Activated naive CD4-positive, alpha-beta T cell treated with anti-CD3 and anti-CD28 coated beads, Interleukin-2, amount 10 ng/mL, durations not matched to agents 7 days and 5 days (primary cell): ENCODE measurements at regions of chr11 and their contacts with region 1.

Region 1: DNA sequence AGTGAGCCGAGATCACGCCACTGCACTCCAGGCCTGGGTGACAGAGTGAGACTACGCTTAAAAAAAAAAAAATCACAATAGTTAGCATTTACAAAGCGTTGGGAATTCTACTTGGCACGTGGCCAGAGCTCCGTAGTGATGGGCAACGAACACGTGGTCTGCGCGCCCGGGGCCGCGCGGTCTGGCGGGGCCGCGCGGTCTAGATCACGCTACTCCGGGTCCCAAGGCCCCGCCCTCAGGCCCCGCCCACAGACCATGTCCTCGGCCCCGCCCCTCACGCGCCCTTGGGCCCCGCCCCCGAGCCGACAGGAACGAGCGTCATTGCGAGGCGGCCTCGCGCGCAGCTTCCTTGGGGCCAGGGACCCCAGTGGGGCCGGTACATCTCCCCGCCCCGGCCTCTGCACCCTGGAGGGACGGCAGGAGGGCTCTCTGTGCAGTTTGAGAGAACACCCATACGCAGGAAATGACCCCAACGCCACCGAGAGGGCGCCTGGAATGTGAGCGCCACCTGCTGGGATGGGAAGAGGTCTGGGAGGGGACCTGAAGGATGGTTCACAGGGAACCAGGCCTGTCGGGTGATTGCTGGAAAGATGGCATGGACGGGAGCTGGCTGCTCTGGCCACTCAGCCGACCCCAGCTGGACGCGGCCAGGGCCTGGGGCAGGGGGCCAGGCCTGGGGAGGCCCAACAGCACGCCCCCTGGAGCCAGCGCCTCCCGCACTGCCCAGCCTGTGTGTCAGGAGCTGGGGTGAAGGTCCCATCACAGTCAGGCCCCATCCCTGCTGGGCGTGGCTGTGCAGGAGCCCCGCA is 2.0 kb upstream of the PTDSS2 start:
- DNase-seq: peak; percentile 97
- H3K4me3 Mint-ChIP-seq: peak overlapping the region; percentile 88
- H3K27ac Mint-ChIP-seq: peak overlapping the region; percentile 96
- H3K4me1 Mint-ChIP-seq: peaks cover 28% of the 10 kb centered on the region
- H3K27me3 Mint-ChIP-seq: peaks cover 32% of the 10 kb centered on the region

Region 2: GRCh38 chr11:363948-364761 is 84.0 kb before region 1 on chr11:
- CTCF ChIA-PET with region 1: interaction called, 14 read pairs
- DNase-seq: peak; percentile 68
- H3K4me3 Mint-ChIP-seq: no peak overlapping the region
- H3K27ac Mint-ChIP-seq: no peak overlapping the region
- H3K4me1 Mint-ChIP-seq: peaks cover 8% of the 10 kb centered on the region
- H3K27me3 Mint-ChIP-seq: peaks cover 69% of the 10 kb centered on the region

Region 3: GRCh38 chr11:406978-407739 is 41.0 kb before region 1 on chr11:
- CTCF ChIA-PET with region 1: interaction called, 18 read pairs
- DNase-seq: peak; percentile 95
- H3K4me3 Mint-ChIP-seq: peak overlapping the region; percentile 15
- H3K27ac Mint-ChIP-seq: peak overlapping the region; percentile 73
- H3K4me1 Mint-ChIP-seq: peaks cover 12% of the 10 kb centered on the region
- H3K27me3 Mint-ChIP-seq: no peaks in the 10 kb centered on the region

Region 4: GRCh38 chr11:416757-417621 is 31.1 kb before region 1 on chr11:
- CTCF ChIA-PET with region 1: interaction called, 37 read pairs
- DNase-seq: peak; percentile 73
- H3K4me3 Mint-ChIP-seq: peak overlapping the region; percentile 93
- H3K27ac Mint-ChIP-seq: peak overlapping the region; percentile 88
- H3K4me1 Mint-ChIP-seq: peaks cover 24% of the 10 kb centered on the region
- H3K27me3 Mint-ChIP-seq: no peaks in the 10 kb centered on the region